ENCODE measurements at regions of chr7 and their contacts with region 1.

Region 1: GRCh38 chr7:135286876-135287275 is 53.2 kb downstream of the STRA8 start:
- DNase-seq: no peak
- H3K4me3 ChIP-seq: no peak overlapping the region
- H3K27ac ChIP-seq: no peak overlapping the region
- H3K27me3 ChIP-seq: no peaks in the 10 kb centered on the region
- CTCF ChIP-seq: no peak

Region 2: DNA sequence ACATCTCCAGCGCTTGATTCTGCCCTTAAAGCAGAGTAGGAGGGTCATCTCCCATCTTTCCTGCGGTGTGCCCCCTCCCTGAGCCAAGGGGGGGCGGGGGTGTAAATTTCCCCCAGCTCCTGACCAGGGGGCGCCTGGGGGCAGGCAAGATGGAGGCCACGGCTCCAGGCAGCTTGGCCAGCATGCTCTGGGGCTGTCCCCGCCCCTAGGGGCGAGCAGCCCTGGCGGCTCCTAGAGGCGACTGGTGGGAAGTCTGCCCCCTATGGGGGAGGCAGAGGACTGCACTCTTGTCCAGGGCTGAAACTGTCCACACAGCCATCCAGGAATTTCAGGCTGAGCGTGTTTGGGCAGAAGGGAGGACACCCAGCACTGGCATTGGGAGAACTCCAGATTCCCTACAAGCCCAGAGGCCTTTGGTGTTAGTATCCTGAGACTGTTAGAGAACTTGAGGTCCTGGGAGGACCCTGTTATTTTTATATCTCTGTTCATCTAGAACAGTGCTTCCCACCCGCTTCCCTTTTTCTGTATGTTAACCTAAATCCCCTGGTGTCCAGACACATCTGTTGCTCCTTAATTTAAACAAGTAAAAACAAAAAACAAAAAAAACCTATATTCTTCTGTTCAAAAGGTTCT is 48.6 kb before region 1 on chr7:
- intact Hi-C with region 1: no loop called
- DNase-seq: no peak
- H3K4me3 ChIP-seq: no peak overlapping the region
- H3K27ac ChIP-seq: no peak overlapping the region
- H3K27me3 ChIP-seq: no peaks in the 10 kb centered on the region
- CTCF ChIP-seq: peak in 6 of 56 donors; percentile 11 to 39 (median 16)

Region 3: DNA sequence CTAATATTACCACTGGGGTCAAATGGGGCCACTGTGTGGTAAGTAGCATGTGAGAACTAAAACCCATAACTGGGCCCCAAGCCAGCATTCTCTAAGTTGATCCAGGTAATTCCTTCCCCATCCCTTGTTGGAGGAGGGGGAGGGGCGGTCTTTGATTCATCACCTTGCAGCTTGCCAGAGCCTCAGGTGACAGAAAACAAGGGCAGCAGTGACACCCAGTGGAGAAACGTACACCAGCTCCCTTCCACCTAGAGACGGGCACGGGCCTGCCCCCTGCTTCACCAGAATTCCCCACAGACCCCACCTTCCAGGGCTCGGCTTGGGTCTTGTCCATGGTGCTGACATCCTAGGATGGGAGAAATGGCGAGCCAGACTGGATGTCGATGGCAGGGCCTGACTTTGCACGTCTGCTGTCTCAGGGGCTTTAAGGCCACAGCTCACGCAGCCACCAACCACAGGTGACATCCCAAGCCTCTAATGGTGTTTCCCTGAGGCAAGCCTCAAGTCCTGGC is 48.8 kb after region 1 on chr7:
- intact Hi-C with region 1: loop called in 1 of 2 experiments (anchors 5 kb)
- DNase-seq: peak in 6 of 10 donors; percentile 18 to 55 (median 44)
- H3K4me3 ChIP-seq: no peak overlapping the region
- H3K27ac ChIP-seq: no peak overlapping the region
- H3K27me3 ChIP-seq: no peaks in the 10 kb centered on the region
- CTCF ChIP-seq: peak in 44 of 56 donors; percentile 12 to 56 (median 34)

Measured in dorsolateral prefrontal cortex (tissue), 120 donors.